ENCODE measurements at regions of chr12 and their contacts with region 1.

Region 1: DNA sequence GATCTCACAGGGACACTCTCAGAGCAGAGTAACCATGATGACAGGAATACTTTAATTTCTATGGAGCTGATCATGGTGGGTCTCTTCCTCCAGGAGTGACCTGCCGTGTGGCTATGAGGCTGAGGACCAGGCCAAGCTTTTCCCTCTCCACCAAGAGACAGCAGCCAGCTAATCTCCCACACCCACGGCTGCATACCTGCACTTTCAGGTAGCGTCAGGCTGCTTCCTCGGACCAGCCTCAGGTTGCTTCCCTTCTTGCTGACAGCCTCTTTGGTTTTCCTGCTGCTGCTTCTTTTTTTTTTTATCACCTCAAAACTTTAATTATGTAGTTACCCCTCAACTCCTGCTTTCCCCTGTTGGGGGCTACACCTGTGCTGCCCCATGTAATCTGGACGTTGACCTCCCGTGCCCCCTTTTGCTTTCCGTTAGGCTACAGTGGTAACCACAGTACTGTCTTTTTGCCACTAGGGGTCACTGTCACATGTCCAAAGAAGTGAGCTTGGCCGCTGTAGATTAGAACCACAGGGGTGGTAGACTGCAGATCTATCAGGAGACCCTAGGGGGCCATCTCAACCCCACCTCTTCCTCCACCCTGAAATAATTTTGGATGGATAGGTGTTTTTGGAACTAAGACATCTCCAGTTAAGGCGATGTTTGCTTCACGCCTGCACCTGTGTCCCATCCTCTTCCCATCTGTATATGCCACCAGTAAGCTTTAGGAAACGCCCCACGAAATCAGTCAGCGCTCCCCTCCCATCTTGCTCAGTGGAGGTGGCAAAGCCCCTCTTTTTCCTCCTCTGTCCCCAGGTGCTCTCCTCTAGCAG is 7.8 kb upstream of the PIP4K2C start:
- DNase-seq: peak; percentile 88
- ATAC-seq: peak; percentile 100
- H3K4me3 ChIP-seq: no peak overlapping the region
- H3K4me3 Mint-ChIP-seq: no peak overlapping the region
- H3K27ac ChIP-seq: no peak overlapping the region
- H3K27ac Mint-ChIP-seq: no peak overlapping the region
- H3K4me1 ChIP-seq: peaks cover 0 to 3% of the 10 kb centered on the region in 2 donors
- H3K4me1 Mint-ChIP-seq: peaks cover 2% of the 10 kb centered on the region
- H3K27me3 ChIP-seq: peaks cover 0 to 46% (median 10%) of the 10 kb centered on the region in 4 experiments
- H3K27me3 Mint-ChIP-seq: peaks cover 14% of the 10 kb centered on the region
- CTCF ChIP-seq: peak; percentile 98

Region 2: GRCh38 chr12:57069523-57069922 is 513.7 kb before region 1 on chr12:
- CTCF ChIA-PET with region 1: no interaction called
- POLR2A ChIA-PET with region 1: no interaction called
- intact Hi-C with region 1: no loop called
- DNase-seq: peak; percentile 85
- ATAC-seq: peak; percentile 100
- H3K4me3 ChIP-seq: no peak overlapping the region
- H3K4me3 Mint-ChIP-seq: no peak overlapping the region
- H3K27ac ChIP-seq: peak overlapping the region; percentile 30 to 53
- H3K27ac Mint-ChIP-seq: peak overlapping the region; percentile 82
- H3K4me1 ChIP-seq: peaks cover 12 to 23% of the 10 kb centered on the region in 2 donors
- H3K4me1 Mint-ChIP-seq: peaks cover 32% of the 10 kb centered on the region
- H3K27me3 ChIP-seq: no peaks in the 10 kb centered on the region
- H3K27me3 Mint-ChIP-seq: no peaks in the 10 kb centered on the region
- CTCF ChIP-seq: peak; percentile 85

Region 3: GRCh38 chr12:57611108-57611809 is 28.0 kb after region 1 on chr12 and contains the start of gene ARHGEF25:
- CTCF ChIA-PET with region 1: interaction called, 97 read pairs
- POLR2A ChIA-PET with region 1: interaction called, 6 read pairs
- intact Hi-C with region 1: no loop called
- DNase-seq: no peak
- ATAC-seq: peak; percentile 26
- H3K4me3 ChIP-seq: peak within 1 kb of the TSS in 4 of 5 experiments; percentile 34 to 62 (median 50)
- H3K4me3 Mint-ChIP-seq: peak within 1 kb of the TSS; percentile 81
- H3K27ac ChIP-seq: no peak within 1 kb of the TSS
- H3K27ac Mint-ChIP-seq: no peak within 1 kb of the TSS
- H3K4me1 ChIP-seq: peaks cover 52 to 59% of the 10 kb centered on the region in 2 donors
- H3K4me1 Mint-ChIP-seq: peaks cover 53% of the 10 kb centered on the region
- H3K27me3 ChIP-seq: peaks cover 0 to 71% (median 33%) of the 10 kb centered on the region in 4 experiments
- H3K27me3 Mint-ChIP-seq: peaks cover 45% of the 10 kb centered on the region
- CTCF ChIP-seq: no peak
- total RNA-seq, gene ARHGEF25: 0.15 TPM in 1 of 2 replicates, not detected in the other

Region 4: GRCh38 chr12:57621497-57622292 is 38.5 kb after region 1 on chr12:
- CTCF ChIA-PET with region 1: interaction called, 122 read pairs
- POLR2A ChIA-PET with region 1: interaction called, 3 read pairs
- intact Hi-C with region 1: loop called (anchors 1 kb)
- DNase-seq: peak; percentile 76
- ATAC-seq: peak; percentile 78
- H3K4me3 ChIP-seq: peak overlapping the region; percentile 13 to 51 (median 47)
- H3K4me3 Mint-ChIP-seq: peak overlapping the region; percentile 85
- H3K27ac ChIP-seq: no peak overlapping the region
- H3K27ac Mint-ChIP-seq: no peak overlapping the region
- H3K4me1 ChIP-seq: peaks cover 32 to 48% of the 10 kb centered on the region in 2 donors
- H3K4me1 Mint-ChIP-seq: peaks cover 37% of the 10 kb centered on the region
- H3K27me3 ChIP-seq: peaks cover 0 to 92% (median 69%) of the 10 kb centered on the region in 4 experiments
- H3K27me3 Mint-ChIP-seq: peaks cover 88% of the 10 kb centered on the region
- CTCF ChIP-seq: peak; percentile 97

Region 5: DNA sequence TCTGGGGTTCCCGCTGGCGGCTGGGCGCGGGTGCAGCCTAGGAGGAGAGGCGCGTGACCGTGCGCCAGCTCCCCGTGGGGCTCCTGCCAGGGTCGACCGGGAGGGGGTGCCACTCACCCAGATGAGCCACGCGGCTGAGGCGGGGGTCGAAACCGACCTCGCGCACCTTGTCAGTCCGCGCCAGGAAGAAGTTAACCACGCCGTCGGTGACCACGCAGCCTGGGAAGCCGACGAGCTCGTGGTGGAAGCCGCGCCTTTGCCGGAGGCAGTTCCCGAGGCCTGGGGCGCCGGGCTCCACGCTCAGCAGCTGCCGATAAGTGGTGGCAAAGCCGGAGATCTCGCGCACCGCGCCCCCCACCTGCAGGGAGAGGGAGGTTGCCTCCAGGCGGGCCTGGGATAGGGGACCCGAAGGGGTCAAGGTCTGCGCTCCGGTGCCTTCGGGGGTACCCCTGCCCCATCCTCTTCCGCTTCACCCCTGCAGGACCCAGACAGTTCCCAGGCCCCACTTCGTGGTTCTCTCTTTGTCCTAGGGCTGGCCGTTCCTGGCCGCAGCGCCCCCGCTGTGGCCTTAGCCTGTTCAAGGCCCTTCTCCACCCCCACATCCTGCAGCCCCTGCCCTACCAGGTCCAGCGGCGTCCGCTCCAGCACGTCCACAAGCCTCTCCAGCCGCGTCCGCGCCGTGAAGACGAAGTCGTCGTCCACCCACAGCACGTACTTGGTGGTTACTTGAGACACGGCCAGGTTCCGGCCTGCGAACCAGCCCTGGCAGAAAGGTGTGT is 44.5 kb after region 1 on chr12:
- CTCF ChIA-PET with region 1: interaction called, 122 read pairs
- POLR2A ChIA-PET with region 1: no interaction called
- intact Hi-C with region 1: no loop called
- DNase-seq: peak; percentile 49
- ATAC-seq: peak; percentile 48
- H3K4me3 ChIP-seq: peak overlapping the region in 2 of 5 experiments; percentile 11 to 25
- H3K4me3 Mint-ChIP-seq: peak overlapping the region; percentile 57
- H3K27ac ChIP-seq: no peak overlapping the region
- H3K27ac Mint-ChIP-seq: no peak overlapping the region
- H3K4me1 ChIP-seq: peaks cover 19 to 38% of the 10 kb centered on the region in 2 donors
- H3K4me1 Mint-ChIP-seq: peaks cover 20% of the 10 kb centered on the region
- H3K27me3 ChIP-seq: peaks cover 0 to 97% (median 73%) of the 10 kb centered on the region in 4 experiments
- H3K27me3 Mint-ChIP-seq: peaks cover 84% of the 10 kb centered on the region
- CTCF ChIP-seq: peak; percentile 20

Region 6: DNA sequence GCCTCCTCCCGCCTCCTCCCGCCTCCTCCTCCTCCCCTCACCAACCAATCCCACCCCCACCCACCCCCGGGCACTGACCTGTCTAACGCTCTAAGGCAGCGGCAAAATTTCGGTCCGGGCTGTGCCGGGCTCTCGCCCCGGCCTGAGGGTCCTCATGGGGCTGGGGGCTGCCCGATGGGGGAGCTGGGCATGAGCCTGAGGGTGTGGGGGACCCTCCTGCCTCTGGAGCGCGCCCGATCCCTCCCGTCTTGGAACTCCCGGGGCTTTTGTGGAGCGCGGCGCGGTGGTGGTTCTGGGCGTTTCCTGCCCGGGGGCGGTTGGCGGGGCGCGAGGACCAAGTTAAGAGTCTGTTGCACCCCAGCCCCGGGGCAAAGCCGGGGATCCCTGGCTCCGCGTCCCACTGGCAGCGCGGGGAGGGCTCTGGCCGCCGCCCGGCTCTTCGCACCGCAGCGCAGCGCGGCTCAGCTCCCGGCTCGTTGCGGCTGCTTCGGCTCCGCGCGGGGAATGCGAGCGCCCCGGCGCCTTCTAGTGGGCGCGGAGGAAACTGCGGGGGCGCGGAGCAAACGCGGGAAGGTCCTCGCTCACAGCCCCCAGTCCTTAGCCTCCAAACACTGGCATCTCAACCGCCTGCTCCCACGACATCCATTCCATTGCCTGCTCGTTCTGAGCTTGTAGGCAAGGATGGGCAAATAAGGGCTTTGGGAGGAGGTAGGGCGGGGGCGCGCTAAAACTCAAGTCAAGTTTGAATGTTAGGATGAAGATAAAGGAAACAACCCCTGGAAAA is 49.7 kb after region 1 on chr12 and contains the start of gene B4GALNT1:
- CTCF ChIA-PET with region 1: interaction called, 66 read pairs
- POLR2A ChIA-PET with region 1: no interaction called
- intact Hi-C with region 1: loop called (anchors 1 kb)
- DNase-seq: peak; percentile 82
- ATAC-seq: peak; percentile 97
- H3K4me3 ChIP-seq: peak within 1 kb of the TSS in 4 of 5 experiments; percentile 40 to 75 (median 56)
- H3K4me3 Mint-ChIP-seq: peak within 1 kb of the TSS; percentile 77
- H3K27ac ChIP-seq: no peak within 1 kb of the TSS
- H3K27ac Mint-ChIP-seq: no peak within 1 kb of the TSS
- H3K4me1 ChIP-seq: peaks cover 20 to 24% of the 10 kb centered on the region in 2 donors
- H3K4me1 Mint-ChIP-seq: peaks cover 19% of the 10 kb centered on the region
- H3K27me3 ChIP-seq: peaks cover 0 to 69% (median 43%) of the 10 kb centered on the region in 4 experiments
- H3K27me3 Mint-ChIP-seq: peaks cover 52% of the 10 kb centered on the region
- CTCF ChIP-seq: peak; percentile 98
- total RNA-seq, gene B4GALNT1: 0.22 TPM in 1 of 2 replicates, not detected in the other

Region 7: GRCh38 chr12:57693659-57694458 is 110.6 kb after region 1 on chr12 and contains the start of gene OS9:
- CTCF ChIA-PET with region 1: interaction called, 7 read pairs
- POLR2A ChIA-PET with region 1: no interaction called
- intact Hi-C with region 1: loop called (anchors 1 kb)
- DNase-seq: peak; percentile 99
- ATAC-seq: peak; percentile 92
- H3K4me3 ChIP-seq: peak within 1 kb of the TSS; percentile 80 to 93 (median 89)
- H3K4me3 Mint-ChIP-seq: no peak within 1 kb of the TSS
- H3K27ac ChIP-seq: peak within 1 kb of the TSS; percentile 62 to 78
- H3K27ac Mint-ChIP-seq: no peak within 1 kb of the TSS
- H3K4me1 ChIP-seq: peaks cover 13 to 17% of the 10 kb centered on the region in 2 donors
- H3K4me1 Mint-ChIP-seq: peaks cover 13% of the 10 kb centered on the region
- H3K27me3 ChIP-seq: no peaks in the 10 kb centered on the region
- H3K27me3 Mint-ChIP-seq: peaks cover 13% of the 10 kb centered on the region
- CTCF ChIP-seq: peak; percentile 82
- total RNA-seq, gene OS9: 182 and 200 TPM in 2 replicates

Region 8: DNA sequence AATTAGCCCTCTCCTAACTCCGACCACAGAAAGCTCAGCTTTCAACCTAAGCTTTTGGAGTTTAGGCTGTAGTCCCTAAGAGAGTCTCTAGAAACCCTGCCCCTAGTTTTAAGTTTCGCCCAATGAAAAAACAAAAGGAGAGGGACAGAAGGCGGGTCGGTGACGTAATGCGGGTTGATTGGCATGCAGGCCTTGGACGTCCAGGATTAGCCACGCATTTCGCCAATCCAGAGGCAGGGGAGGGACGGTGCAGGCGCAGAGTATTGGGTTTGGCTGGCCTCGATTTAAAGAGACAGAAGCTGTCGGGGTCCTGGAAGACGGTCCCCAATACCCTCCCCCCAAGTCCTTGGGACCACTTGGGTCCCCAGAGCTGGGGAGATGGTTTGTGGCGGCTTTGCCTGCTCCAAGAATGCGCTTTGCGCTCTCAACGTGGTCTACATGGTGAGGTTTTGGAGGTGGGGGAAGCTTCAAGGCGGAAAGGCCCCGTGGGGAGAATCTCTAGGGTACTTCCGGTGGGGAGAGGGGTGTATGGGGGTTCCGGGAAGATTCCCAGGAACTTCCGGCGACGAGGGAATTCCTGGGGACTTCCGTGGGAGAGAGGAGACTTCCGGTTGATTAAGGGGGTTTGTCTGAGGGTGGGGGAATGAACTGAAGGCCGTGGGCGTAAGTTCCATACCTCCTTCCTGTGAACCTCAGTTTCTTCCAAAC is 161.7 kb after region 1 on chr12 and contains the start of gene TSPAN31:
- CTCF ChIA-PET with region 1: interaction called, 9 read pairs
- POLR2A ChIA-PET with region 1: no interaction called
- intact Hi-C with region 1: loop called (anchors 1 kb)
- DNase-seq: peak; percentile 97
- ATAC-seq: peak; percentile 86
- H3K4me3 ChIP-seq: peak within 1 kb of the TSS; percentile 68 to 90 (median 86)
- H3K4me3 Mint-ChIP-seq: peak within 1 kb of the TSS; percentile 92
- H3K27ac ChIP-seq: peak within 1 kb of the TSS; percentile 80 to 94
- H3K27ac Mint-ChIP-seq: peak within 1 kb of the TSS; percentile 91
- H3K4me1 ChIP-seq: peaks cover 33 to 52% of the 10 kb centered on the region in 2 donors
- H3K4me1 Mint-ChIP-seq: peaks cover 44% of the 10 kb centered on the region
- H3K27me3 ChIP-seq: no peaks in the 10 kb centered on the region
- H3K27me3 Mint-ChIP-seq: no peaks in the 10 kb centered on the region
- CTCF ChIP-seq: no peak
- total RNA-seq, gene TSPAN31: 29.6 and 33.5 TPM in 2 replicates

Measured in B cell (primary cell).